Dorsolateral prefrontal cortex (tissue), 120 donors: ENCODE measurements at regions of chr11 and their contacts with region 1.

Region 1: GRCh38 chr11:122578168-122578825 is 77.2 kb upstream of the UBASH3B start:
- DNase-seq: no peak
- H3K4me3 ChIP-seq: no peak overlapping the region
- H3K27ac ChIP-seq: no peak overlapping the region
- H3K27me3 ChIP-seq: no peaks in the 10 kb centered on the region
- CTCF ChIP-seq: no peak

Region 2: DNA sequence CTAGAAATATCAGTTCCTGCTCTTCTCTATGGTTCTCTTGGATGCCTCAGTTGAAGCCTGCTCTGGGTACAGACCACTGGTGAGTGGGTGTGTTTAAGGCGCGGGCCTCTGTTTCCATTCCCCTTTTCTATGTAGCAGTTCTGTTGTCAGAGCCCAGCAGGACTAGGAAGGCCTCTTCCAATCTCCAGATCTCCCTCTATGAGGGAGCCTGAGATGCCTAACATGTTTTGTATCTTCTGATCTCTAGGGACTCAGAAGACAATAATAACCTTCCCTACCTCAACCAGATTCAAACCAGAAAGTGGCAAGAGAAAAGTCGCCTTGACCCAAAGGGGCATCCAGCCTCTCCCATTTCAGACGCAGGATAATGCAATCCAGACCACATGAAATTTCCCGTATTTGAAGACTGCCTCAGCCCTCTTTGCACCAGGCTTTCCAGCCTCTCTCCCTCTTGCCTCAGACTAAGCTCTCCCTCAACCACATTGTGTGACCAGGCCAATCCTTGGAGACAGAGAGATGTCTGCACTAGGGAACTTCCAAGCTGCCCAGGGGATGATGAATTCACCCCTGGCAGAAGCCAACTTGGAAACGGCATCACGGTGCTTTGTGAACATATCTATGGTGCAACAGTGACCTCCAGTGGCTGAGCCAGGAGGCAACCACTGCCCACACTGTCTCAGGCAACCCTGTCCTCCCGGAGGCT is 72.8 kb before region 1 on chr11:
- intact Hi-C with region 1: no loop called
- DNase-seq: peak; percentile 71 to 91 (median 86)
- H3K4me3 ChIP-seq: peak overlapping the region in 2 of 59 donors; percentile 0 to 7
- H3K27ac ChIP-seq: peak overlapping the region in 26 of 59 donors; percentile 6 to 75 (median 52)
- H3K27me3 ChIP-seq: no peaks in the 10 kb centered on the region
- CTCF ChIP-seq: peak; percentile 69 to 98 (median 92)

Region 3: GRCh38 chr11:122781378-122782195 is 203.3 kb after region 1 on chr11:
- intact Hi-C with region 1: loop called in 1 of 2 experiments (anchors 2 kb)
- DNase-seq: peak; percentile 77 to 93 (median 88)
- H3K4me3 ChIP-seq: no peak overlapping the region
- H3K27ac ChIP-seq: peak overlapping the region in 5 of 59 donors; percentile 12 to 95 (median 20)
- H3K27me3 ChIP-seq: no peaks in the 10 kb centered on the region
- CTCF ChIP-seq: peak; percentile 86 to 99 (median 95)

Region 4: GRCh38 chr11:122853971-122854446 is 275.7 kb after region 1 on chr11:
- intact Hi-C with region 1: loop called (anchors 2 kb)
- DNase-seq: peak in 2 of 10 donors; percentile 52 to 68
- H3K4me3 ChIP-seq: peak overlapping the region in 1 of 59 donors; percentile 13
- H3K27ac ChIP-seq: peak overlapping the region in 1 of 59 donors; percentile 88
- H3K27me3 ChIP-seq: peaks cover 0 to under 1% (median 0%) of the 10 kb centered on the region in 45 donors
- CTCF ChIP-seq: peak; percentile 64 to 93 (median 81)